Endothelial cell of umbilical vein (primary cell): ENCODE measurements at regions of chr6 and their contacts with region 1.

Region 1: GRCh38 chr6:166488076-166488685 is 98.3 kb downstream of the RAMACL start:
- DNase-seq: peak; percentile 99
- H3K4me3 ChIP-seq: no peak overlapping the region
- H3K27ac ChIP-seq: peak overlapping the region; percentile 92
- H3K4me1 ChIP-seq: peaks cover 49% of the 10 kb centered on the region
- H3K27me3 ChIP-seq: no peaks in the 10 kb centered on the region
- CTCF ChIP-seq: no peak
- POLR2A ChIP-seq: peak; percentile 77

Region 2: DNA sequence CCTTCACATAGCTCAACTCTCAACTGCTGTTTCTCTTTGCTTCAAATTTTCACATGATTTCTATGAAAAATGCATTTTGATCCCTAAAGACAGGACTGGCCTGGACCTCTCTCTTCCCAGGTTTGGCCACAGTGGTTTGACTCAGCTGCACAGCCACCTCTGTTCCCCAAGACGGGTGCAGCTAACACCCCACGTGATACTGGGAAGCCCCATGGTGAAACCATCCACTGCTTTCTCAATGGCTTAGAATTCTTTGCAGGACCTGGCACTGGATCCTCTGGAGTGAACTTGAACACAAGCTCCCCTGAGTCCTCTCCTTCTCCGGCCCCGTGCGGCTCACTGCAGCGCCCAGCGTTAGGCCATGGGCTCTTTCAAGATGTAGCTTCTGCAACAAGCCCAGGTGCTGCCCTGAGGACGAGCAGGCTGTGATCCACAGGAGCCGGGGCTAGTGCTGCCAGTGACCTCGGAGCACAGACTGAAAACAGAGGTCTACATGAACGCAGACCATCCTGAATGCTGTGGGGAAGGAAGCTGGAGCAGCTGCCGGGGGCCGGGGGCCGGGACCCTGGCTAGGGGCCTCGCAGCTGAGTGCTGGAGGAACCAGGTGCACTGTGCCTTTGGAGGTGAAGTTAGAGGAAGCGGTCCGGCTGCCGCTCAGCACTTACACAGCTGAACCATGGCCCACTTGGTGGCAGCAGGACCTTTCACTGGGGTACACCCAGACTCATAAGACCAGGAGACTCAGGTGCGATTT is 46.7 kb before region 1 on chr6:
- CTCF ChIA-PET with region 1: interaction called, 3 read pairs
- POLR2A ChIA-PET with region 1: no interaction called
- dilution Hi-C with region 1: no loop called
- intact Hi-C with region 1: loop called (anchors 1 kb)
- DNase-seq: no peak
- H3K4me3 ChIP-seq: no peak overlapping the region
- H3K27ac ChIP-seq: no peak overlapping the region
- H3K4me1 ChIP-seq: peaks cover 10% of the 10 kb centered on the region
- H3K27me3 ChIP-seq: no peaks in the 10 kb centered on the region
- CTCF ChIP-seq: no peak
- POLR2A ChIP-seq: no peak

Region 3: DNA sequence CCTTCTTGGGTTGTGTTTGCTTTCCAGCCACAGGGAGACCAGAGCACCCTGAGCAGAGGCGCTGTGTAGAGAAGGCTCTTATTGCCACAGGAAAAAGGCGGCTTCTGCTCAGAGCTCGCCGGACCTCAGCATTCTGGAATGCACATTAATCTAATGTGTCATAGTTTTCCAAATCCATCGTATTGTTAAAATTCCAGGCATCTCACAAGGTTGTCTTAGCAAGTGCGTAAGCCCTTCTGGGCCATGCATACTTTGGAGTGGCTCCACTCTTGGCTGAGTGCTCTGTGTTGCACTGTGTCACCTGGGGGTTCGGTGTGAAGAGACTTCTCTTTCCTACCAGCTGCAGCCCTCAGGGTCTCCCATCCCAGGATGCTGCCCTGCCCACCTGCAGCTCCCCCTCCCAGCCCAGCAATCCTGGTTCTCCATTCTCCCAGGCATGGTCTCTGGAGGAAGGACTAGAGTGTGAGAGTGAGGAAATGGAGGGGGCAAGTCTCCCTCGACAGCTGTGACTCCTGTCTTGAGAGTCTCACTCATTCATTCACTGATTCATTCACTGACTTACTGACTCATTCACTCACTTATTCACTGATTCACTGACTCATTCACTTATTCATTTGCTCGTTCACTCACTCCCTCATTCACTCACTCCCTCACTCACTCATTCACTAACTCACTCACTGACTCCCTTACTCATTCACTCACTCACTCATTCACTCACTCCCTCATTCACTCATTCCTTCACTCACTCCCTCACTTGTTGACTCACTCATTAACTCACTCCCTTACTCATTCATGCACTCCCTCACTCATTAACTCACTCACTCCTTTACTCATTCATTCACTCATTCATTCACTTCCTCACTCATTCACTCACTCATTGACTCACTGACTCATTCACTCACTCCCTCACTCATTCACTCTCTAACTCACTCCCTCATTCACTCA is 21.7 kb before region 1 on chr6:
- CTCF ChIA-PET with region 1: no interaction called
- POLR2A ChIA-PET with region 1: no interaction called
- dilution Hi-C with region 1: no loop called
- intact Hi-C with region 1: loop called (anchors 2 kb)
- DNase-seq: peak; percentile 55
- H3K4me3 ChIP-seq: no peak overlapping the region
- H3K27ac ChIP-seq: peak overlapping the region; percentile 37
- H3K4me1 ChIP-seq: peaks cover 6% of the 10 kb centered on the region
- H3K27me3 ChIP-seq: no peaks in the 10 kb centered on the region
- CTCF ChIP-seq: no peak
- POLR2A ChIP-seq: no peak

Region 4: DNA sequence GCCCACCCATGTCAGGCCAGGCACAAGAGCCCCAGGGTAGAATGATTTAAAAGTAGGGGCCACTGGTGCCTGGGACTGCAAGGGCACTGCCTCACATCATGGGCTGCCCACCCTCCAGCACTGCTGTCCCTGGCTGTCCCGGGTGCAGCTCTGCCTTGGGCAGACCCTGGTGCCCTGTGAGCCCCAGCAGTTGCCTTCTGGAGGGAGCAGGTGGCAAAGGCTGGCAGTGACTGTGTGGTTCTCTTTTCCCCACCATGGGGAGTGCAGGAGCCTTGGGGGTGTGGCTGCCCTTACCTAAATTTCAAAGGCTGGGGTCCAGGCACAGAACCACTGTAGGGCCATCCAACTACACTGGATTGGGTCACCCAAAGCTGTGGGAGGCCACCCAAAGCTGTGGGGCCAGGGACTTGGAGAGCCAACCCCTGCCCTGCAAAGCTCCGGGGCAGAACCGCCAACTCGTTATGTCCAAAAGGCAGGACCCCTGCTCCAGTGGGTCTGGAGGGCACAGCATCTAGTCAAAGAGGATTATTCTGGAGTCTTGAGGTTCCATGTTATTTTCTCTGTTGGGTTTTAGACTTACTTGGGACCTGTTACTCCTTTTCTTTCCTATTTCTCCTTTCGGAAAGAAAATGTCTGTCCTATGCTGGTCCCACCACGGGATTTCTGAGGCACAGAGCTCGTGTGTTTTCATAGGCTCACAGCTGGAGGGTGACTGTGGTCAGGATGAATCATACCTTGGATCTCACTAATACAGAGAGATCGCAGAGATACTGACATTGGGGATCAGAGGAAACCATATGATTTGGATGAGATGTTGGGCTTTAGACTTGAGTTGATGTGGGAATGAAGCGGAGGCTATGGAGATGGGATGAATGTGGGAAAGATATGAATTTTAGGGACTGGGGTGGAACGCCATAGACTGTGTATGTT is 33.0 kb after region 1 on chr6:
- CTCF ChIA-PET with region 1: no interaction called
- POLR2A ChIA-PET with region 1: no interaction called
- dilution Hi-C with region 1: no loop called
- intact Hi-C with region 1: no loop called
- DNase-seq: no peak
- H3K4me3 ChIP-seq: no peak overlapping the region
- H3K27ac ChIP-seq: no peak overlapping the region
- H3K4me1 ChIP-seq: no peaks in the 10 kb centered on the region
- H3K27me3 ChIP-seq: no peaks in the 10 kb centered on the region
- CTCF ChIP-seq: no peak
- POLR2A ChIP-seq: no peak

Region 5: GRCh38 chr6:166640342-166641043 is 152.3 kb after region 1 on chr6:
- CTCF ChIA-PET with region 1: no interaction called
- POLR2A ChIA-PET with region 1: no interaction called
- dilution Hi-C with region 1: no loop called
- intact Hi-C with region 1: loop called (anchors 5 kb)
- DNase-seq: peak; percentile 76
- H3K4me3 ChIP-seq: peak overlapping the region in 1 of 3 experiments; percentile 21
- H3K27ac ChIP-seq: peak overlapping the region; percentile 59
- H3K4me1 ChIP-seq: peaks cover 34% of the 10 kb centered on the region
- H3K27me3 ChIP-seq: no peaks in the 10 kb centered on the region
- CTCF ChIP-seq: peak in 1 of 2 donors; percentile 13
- POLR2A ChIP-seq: no peak

Region 6: DNA sequence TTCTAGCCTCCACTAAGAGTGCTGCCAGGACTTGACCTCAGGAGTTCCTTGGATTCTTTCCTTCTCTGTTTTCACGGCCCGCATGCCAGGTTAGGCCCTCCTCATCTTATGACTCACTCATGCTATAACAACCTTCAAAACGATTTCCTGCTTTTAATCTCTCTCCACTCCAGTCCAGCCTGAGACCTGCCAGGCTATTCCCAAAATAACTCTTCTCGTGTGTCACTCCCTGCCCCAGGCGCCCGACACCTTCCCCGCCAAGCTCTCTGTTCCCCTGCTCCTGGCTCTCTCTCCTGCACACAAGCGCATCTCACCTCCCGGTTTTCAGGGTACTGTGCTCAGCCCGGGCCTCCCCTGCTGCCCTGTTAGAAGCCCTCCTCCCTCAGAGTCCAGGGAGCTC is 203.0 kb after region 1 on chr6:
- CTCF ChIA-PET with region 1: interaction called, 4 read pairs
- POLR2A ChIA-PET with region 1: no interaction called
- dilution Hi-C with region 1: no loop called
- intact Hi-C with region 1: loop called (anchors 1 kb)
- DNase-seq: peak; percentile 88
- H3K4me3 ChIP-seq: no peak overlapping the region
- H3K27ac ChIP-seq: peak overlapping the region; percentile 68
- H3K4me1 ChIP-seq: peaks cover 20% of the 10 kb centered on the region
- H3K27me3 ChIP-seq: no peaks in the 10 kb centered on the region
- CTCF ChIP-seq: no peak
- POLR2A ChIP-seq: no peak

Region 7: DNA sequence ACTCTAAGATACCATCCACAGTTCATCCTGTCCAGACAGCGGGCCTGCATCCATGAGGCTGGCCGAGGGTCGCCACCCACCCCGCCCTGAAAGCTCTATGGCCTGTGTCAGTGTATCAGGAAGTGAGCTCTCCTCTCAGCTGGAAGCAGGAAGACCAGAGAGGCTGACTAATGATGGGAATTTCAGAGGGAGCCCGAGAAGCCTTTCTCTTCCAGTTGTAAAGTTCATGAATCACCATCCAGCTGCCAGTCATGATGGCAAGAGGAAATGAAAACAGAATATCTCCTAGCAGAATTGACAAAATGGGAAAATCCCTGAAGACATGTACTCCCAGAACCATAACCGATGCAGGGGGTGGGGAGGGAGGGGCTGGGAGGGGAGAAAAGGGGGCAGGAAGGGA is 248.5 kb after region 1 on chr6:
- CTCF ChIA-PET with region 1: no interaction called
- POLR2A ChIA-PET with region 1: no interaction called
- dilution Hi-C with region 1: no loop called
- intact Hi-C with region 1: loop called (anchors 2 kb)
- DNase-seq: peak; percentile 89
- H3K4me3 ChIP-seq: no peak overlapping the region
- H3K27ac ChIP-seq: peak overlapping the region; percentile 66
- H3K4me1 ChIP-seq: peaks cover 10% of the 10 kb centered on the region
- H3K27me3 ChIP-seq: no peaks in the 10 kb centered on the region
- CTCF ChIP-seq: no peak
- POLR2A ChIP-seq: no peak